Sciatic nerve (tissue), 2 donors: ENCODE measurements at regions of chr20 and their contacts with region 1.

Region 1: GRCh38 chr20:4613718-4614620 is 107.7 kb upstream of the PRND start:
- DNase-seq: peak; percentile 83
- ATAC-seq: peak; percentile 95

Region 2: GRCh38 chr20:4681401-4681800 is 67.4 kb after region 1 on chr20:
- intact Hi-C with region 1: no loop called
- DNase-seq: no peak
- ATAC-seq: no peak

Region 3: DNA sequence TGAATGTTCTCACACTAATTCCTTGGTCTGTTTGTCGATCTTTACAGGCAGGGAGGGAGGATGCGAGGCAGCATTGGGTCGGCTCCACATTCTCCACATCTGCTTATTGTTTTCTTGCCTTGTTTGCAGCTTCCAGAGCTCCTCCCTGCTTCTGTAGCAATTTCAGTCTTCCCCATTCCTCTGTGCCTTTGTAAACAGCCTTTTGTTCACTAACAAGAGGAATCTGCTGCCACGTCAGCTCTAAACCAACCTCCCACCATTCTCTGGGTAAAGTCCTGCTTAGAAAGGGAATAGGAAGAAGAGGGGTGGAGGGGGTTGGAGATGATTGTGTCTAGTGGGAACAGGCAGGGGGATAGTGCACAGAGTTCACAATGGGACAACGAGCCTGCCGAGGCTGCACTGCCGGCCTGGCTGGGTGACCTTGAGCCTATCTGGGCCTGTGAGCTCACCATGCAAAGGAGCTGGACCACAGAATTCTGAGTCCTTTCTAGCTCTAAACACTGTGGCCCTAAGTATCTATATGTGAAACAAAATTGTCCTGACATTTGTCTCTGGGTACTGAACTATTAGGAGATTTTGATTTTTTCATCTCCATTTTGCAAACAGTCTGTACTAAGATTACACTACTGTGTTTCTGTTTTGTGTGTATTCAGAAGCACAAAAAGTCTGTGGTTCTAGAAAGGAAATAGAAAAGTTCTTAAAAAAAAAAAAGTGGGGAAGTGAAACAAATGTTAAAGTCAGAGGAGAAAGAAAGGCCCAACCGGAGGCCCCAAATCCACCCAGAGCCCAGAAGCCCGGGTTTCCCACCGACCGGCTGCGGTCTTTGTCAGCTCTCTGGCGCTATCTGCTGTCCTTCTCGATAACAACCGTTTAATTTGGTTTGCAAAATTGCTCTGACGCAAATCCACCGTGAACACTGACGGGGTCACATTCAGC is 106.3 kb after region 1 on chr20:
- intact Hi-C with region 1: loop called (anchors 5 kb)
- DNase-seq: peak; percentile 88
- ATAC-seq: peak; percentile 93